Activated CD8-positive, alpha-beta T cell treated with anti-CD3 and anti-CD28 coated beads for 36 hours (primary cell): ENCODE measurements at regions of chr16 and their contacts with region 1.

Region 1: GRCh38 chr16:50696575-50697420 is 3.4 kb downstream of the NOD2 start:
- DNase-seq: peak; percentile 63
- ATAC-seq: peak; percentile 35
- H3K4me3 Mint-ChIP-seq: no peak overlapping the region
- H3K27ac Mint-ChIP-seq: peak overlapping the region; percentile 90
- H3K4me1 Mint-ChIP-seq: peaks cover 69% of the 10 kb centered on the region
- H3K27me3 Mint-ChIP-seq: peaks cover 8% of the 10 kb centered on the region
- CTCF ChIP-seq: no peak

Region 2: DNA sequence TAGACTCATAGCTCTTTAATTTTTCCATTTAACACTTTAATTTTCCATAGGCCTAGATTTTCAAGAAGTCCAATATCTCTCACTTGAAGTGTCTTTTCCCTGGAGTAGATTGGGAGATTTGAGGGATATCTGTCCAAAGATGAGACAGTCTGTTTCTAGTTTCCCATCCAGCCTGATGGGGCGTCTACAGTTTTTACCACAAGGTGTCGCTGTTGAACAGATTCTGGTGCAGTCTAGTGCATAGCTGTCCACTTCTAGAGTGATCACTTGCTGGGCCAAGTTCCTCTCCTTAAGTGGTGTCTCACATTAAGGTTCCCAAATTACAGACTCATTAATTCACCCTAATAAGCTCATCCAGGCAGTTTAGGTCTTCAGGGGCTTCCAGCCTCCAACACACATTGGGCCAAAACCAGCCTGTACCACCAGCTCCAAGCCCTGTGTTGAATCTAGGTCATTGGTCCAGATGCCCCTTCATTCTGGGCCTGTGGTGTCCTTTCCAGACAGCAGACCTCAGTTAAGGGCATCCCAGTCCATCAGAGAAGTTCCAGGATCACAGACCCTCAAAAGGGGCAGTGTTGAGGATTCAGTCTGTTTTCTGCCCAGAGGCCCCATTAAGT is 25.0 kb before region 1 on chr16:
- CTCF ChIA-PET with region 1: interaction called, 11 read pairs
- POLR2A ChIA-PET with region 1: interaction called, 3 read pairs
- intact Hi-C with region 1: no loop called
- DNase-seq: peak; percentile 77
- ATAC-seq: peak; percentile 26
- H3K4me3 Mint-ChIP-seq: no peak overlapping the region
- H3K27ac Mint-ChIP-seq: peak overlapping the region; percentile 61
- H3K4me1 Mint-ChIP-seq: peaks cover 23% of the 10 kb centered on the region
- H3K27me3 Mint-ChIP-seq: no peaks in the 10 kb centered on the region
- CTCF ChIP-seq: peak; percentile 92

Region 3: GRCh38 chr16:50681021-50681885 is 15.5 kb before region 1 on chr16 and contains the start of gene SNX20:
- CTCF ChIA-PET with region 1: interaction called, 5 read pairs
- POLR2A ChIA-PET with region 1: interaction called, 19 read pairs
- intact Hi-C with region 1: no loop called
- DNase-seq: peak; percentile 81
- ATAC-seq: peak; percentile 83
- H3K4me3 Mint-ChIP-seq: peak within 1 kb of the TSS; percentile 78
- H3K27ac Mint-ChIP-seq: peak within 1 kb of the TSS; percentile 93
- H3K4me1 Mint-ChIP-seq: peaks cover 79% of the 10 kb centered on the region
- H3K27me3 Mint-ChIP-seq: no peaks in the 10 kb centered on the region
- CTCF ChIP-seq: no peak
- total RNA-seq, gene SNX20: 24.6 to 25.0 TPM

Region 4: GRCh38 chr16:50741808-50742575 is 45.2 kb after region 1 on chr16 and contains the start of gene CYLD:
- CTCF ChIA-PET with region 1: interaction called, 6 read pairs
- POLR2A ChIA-PET with region 1: interaction called, 4 read pairs
- intact Hi-C with region 1: loop called (anchors 5 kb)
- DNase-seq: peak; percentile 100
- ATAC-seq: peak; percentile 91
- H3K4me3 Mint-ChIP-seq: peak within 1 kb of the TSS; percentile 93
- H3K27ac Mint-ChIP-seq: peak within 1 kb of the TSS; percentile 97
- H3K4me1 Mint-ChIP-seq: peaks cover 38% of the 10 kb centered on the region
- H3K27me3 Mint-ChIP-seq: no peaks in the 10 kb centered on the region
- CTCF ChIP-seq: no peak
- total RNA-seq, gene CYLD: 86.4 to 94.4 TPM